ENCODE measurements at regions of chr20 and their contacts with region 1.

Region 1: DNA sequence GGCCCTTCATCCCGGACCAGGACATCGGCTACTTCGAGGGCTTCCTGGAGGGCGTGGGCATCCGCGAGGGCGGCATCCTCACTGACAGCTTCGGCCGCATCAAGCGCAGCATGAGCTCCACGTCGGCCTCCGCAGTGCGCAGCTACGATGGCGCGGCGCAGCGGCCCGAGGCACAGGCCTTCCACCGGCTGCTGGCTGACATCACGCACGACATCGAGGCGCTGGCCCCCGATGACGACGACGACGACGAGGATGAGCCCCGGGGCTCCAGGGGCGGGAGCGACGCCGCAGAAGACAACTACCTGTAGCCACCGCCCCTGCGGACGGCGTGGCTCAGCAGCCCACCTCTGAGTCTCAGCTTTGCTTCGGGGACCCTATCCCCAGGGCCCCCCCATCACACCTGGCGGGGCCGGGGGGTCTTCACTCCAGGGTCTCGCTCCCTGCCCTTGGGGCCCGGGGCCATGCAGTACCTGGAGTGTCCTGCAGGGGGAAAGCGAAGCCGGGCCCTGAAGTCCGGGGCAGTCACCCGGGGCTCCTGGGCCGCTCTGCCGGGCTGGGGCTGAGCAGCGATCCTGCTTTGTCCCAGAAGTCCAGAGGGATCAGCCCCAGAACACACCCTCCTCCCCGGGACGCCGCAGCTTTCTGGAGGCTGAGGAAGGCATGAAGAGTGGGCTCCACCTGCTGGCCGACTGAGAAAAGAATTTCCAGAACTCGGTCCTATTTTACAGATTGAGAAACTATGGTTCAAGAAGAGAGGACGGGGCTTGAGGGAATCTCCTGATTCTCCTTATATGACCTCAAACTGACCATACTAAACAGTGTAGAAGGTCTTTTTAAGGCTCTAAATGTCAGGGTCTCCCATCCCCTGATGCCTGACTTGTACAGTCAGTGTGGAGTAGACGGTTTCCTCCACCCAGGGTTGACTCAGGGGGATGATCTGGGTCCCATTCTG is 20.8 kb upstream of the HCK start:
- DNase-seq: peak; percentile 95
- ATAC-seq: peak; percentile 99
- H3K4me3 Mint-ChIP-seq: peak overlapping the region; percentile 56
- H3K27ac Mint-ChIP-seq: no peak overlapping the region
- H3K4me1 Mint-ChIP-seq: peaks cover 13% of the 10 kb centered on the region
- H3K27me3 Mint-ChIP-seq: peaks cover 7% of the 10 kb centered on the region
- CTCF ChIP-seq: peak; percentile 100

Region 2: DNA sequence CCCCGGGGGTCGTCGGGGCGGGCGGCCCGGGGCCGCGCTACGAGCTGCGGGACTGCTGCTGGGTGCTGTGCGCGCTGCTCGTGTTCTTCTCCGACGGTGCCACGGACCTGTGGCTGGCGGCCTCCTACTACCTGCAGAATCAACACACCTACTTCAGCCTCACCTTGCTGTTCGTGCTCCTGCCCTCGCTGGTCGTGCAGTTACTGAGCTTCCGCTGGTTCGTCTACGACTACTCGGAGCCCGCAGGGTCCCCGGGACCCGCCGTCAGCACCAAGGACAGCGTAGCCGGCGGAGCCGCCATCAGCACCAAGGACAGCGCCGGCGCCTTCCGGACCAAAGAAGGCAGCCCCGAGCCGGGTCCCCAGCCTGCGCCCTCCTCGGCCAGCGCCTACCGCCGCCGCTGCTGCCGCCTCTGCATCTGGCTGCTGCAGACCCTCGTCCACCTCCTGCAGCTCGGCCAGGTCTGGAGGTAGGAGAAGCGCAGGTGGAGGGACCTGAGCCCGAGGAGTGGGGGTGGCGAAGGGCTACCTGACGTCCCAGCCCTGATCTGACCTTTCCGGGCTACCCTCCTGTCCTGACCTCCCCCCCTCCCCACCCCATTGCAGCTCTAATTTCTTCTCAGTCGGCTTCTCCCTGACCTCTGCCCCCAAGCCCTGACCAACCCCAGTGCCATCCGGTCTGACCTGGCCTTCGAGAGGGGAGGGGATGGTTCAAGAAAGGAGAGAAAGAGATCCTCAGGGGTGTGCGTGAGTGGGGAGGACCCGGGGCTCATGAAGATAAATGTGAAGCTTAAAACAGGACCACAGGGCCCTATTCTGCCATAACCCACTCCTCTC is 62.8 kb before region 1 on chr20:
- CTCF ChIA-PET with region 1: interaction called, 14 read pairs
- POLR2A ChIA-PET with region 1: no interaction called
- DNase-seq: peak; percentile 95
- ATAC-seq: peak; percentile 85
- H3K4me3 Mint-ChIP-seq: peak overlapping the region; percentile 93
- H3K27ac Mint-ChIP-seq: peak overlapping the region; percentile 88; the same call in 1 of the 2 replicates
- H3K4me1 Mint-ChIP-seq: peaks cover 20% of the 10 kb centered on the region
- H3K27me3 Mint-ChIP-seq: peaks cover 47% of the 10 kb centered on the region
- CTCF ChIP-seq: no peak

Region 3: GRCh38 chr20:31990641-31991338 is 40.5 kb before region 1 on chr20:
- CTCF ChIA-PET with region 1: interaction called, 14 read pairs
- POLR2A ChIA-PET with region 1: no interaction called
- DNase-seq: no peak
- ATAC-seq: no peak
- H3K4me3 Mint-ChIP-seq: no peak overlapping the region
- H3K27ac Mint-ChIP-seq: no peak overlapping the region
- H3K4me1 Mint-ChIP-seq: peaks cover 9% of the 10 kb centered on the region
- H3K27me3 Mint-ChIP-seq: peaks cover 41% of the 10 kb centered on the region
- CTCF ChIP-seq: no peak

Region 4: DNA sequence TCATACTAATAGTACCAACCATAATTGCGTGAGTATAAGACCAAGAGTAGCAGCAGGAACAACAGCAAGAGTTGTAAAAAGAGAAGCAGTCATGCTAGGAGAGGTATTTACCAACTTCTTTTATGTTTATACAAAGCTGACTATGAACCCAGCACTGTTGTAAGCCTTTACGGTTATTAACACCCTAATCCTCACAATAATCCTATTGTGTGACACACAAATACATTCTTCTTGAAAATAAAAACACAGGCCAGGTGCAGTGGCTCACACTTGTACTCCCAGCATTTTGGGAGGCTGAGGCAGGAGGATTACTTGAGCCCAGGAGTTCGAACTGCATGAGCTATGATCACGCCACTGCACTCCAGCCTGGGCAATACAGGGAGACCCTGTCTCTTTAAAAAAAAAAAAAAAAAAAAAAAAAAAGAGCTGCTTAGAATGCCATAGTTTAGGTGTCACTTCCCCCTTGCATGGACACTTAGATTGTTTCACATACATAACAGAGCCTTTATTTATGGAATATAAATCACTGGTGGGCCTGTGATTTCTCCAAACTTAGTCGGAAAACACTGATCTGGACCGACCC is 41.0 kb after region 1 on chr20:
- CTCF ChIA-PET with region 1: no interaction called
- POLR2A ChIA-PET with region 1: no interaction called
- DNase-seq: no peak
- ATAC-seq: no peak
- H3K4me3 Mint-ChIP-seq: no peak overlapping the region
- H3K27ac Mint-ChIP-seq: peak overlapping the region; percentile 28; the same call in 1 of the 2 replicates
- H3K4me1 Mint-ChIP-seq: peaks cover 4% of the 10 kb centered on the region
- H3K27me3 Mint-ChIP-seq: no peaks in the 10 kb centered on the region
- CTCF ChIP-seq: no peak

Region 5: DNA sequence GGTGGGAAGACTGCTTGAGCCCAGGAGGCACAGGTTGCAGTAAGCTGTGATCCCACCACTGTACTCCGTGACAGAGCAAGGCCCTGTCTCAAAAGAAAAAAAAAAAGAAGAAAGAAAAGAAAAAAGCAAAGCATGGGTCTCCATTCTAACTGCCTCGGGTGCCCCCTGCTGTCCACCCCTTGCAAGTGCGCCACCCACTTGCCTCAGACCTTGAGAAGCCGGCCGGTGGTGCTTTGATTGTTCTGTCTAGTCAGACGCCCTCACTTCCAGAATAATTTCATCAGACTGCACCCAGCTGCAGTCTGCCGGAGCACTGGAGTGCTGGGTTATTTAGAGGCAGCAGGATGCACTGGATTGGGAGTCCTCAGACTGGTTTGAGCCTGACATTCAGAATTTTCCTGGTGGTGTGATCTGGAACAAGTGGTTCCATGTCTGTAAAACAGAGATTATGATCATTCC is 60.6 kb after region 1 on chr20:
- CTCF ChIA-PET with region 1: interaction called, 46 read pairs
- POLR2A ChIA-PET with region 1: no interaction called
- DNase-seq: peak; percentile 91
- ATAC-seq: peak; percentile 62
- H3K4me3 Mint-ChIP-seq: no peak overlapping the region
- H3K27ac Mint-ChIP-seq: no peak overlapping the region
- H3K4me1 Mint-ChIP-seq: peaks cover 33% of the 10 kb centered on the region
- H3K27me3 Mint-ChIP-seq: peaks cover 6% of the 10 kb centered on the region; the same call in 1 of the 2 replicates
- CTCF ChIP-seq: peak; percentile 82

Measured in WTC11 (cell line).